ENCODE measurements at regions of chr3 and their contacts with region 1.

Region 1: GRCh38 chr3:58188173-58188564 is 22.6 kb downstream of the DNASE1L3 start:
- DNase-seq: no peak
- ATAC-seq: peak; percentile 55
- H3K4me3 Mint-ChIP-seq: no peak overlapping the region
- H3K27ac Mint-ChIP-seq: no peak overlapping the region
- H3K4me1 Mint-ChIP-seq: no peaks in the 10 kb centered on the region
- H3K27me3 Mint-ChIP-seq: no peaks in the 10 kb centered on the region
- CTCF ChIP-seq: no peak

Region 2: GRCh38 chr3:58167431-58168351 is 20.5 kb before region 1 on chr3:
- CTCF ChIA-PET with region 1: interaction called, 10 read pairs
- POLR2A ChIA-PET with region 1: no interaction called
- intact Hi-C with region 1: no loop called
- DNase-seq: peak; percentile 80
- ATAC-seq: peak; percentile 99
- H3K4me3 Mint-ChIP-seq: no peak overlapping the region
- H3K27ac Mint-ChIP-seq: no peak overlapping the region
- H3K4me1 Mint-ChIP-seq: peaks cover 3% of the 10 kb centered on the region
- H3K27me3 Mint-ChIP-seq: no peaks in the 10 kb centered on the region
- CTCF ChIP-seq: peak; percentile 92

Region 3: GRCh38 chr3:58202917-58203360 is 14.8 kb after region 1 on chr3:
- CTCF ChIA-PET with region 1: interaction called, 30 read pairs
- POLR2A ChIA-PET with region 1: no interaction called
- intact Hi-C with region 1: no loop called
- DNase-seq: no peak
- ATAC-seq: no peak
- H3K4me3 Mint-ChIP-seq: no peak overlapping the region
- H3K27ac Mint-ChIP-seq: no peak overlapping the region
- H3K4me1 Mint-ChIP-seq: peaks cover 16% of the 10 kb centered on the region
- H3K27me3 Mint-ChIP-seq: peaks cover 4% of the 10 kb centered on the region
- CTCF ChIP-seq: no peak

Region 4: GRCh38 chr3:58223855-58224254 is 35.7 kb after region 1 on chr3:
- CTCF ChIA-PET with region 1: interaction called, 264 read pairs
- POLR2A ChIA-PET with region 1: interaction called, 3 read pairs
- intact Hi-C with region 1: no loop called
- DNase-seq: no peak
- ATAC-seq: no peak
- H3K4me3 Mint-ChIP-seq: no peak overlapping the region
- H3K27ac Mint-ChIP-seq: no peak overlapping the region
- H3K4me1 Mint-ChIP-seq: peaks cover 2% of the 10 kb centered on the region
- H3K27me3 Mint-ChIP-seq: peaks cover 3% of the 10 kb centered on the region
- CTCF ChIP-seq: no peak

Region 5: GRCh38 chr3:58299839-58300516 is 111.8 kb after region 1 on chr3:
- CTCF ChIA-PET with region 1: interaction called, 47 read pairs
- POLR2A ChIA-PET with region 1: interaction called, 3 read pairs
- intact Hi-C with region 1: loop called (anchors 5 kb)
- DNase-seq: no peak
- ATAC-seq: no peak
- H3K4me3 Mint-ChIP-seq: no peak overlapping the region
- H3K27ac Mint-ChIP-seq: no peak overlapping the region
- H3K4me1 Mint-ChIP-seq: no peaks in the 10 kb centered on the region
- H3K27me3 Mint-ChIP-seq: peaks cover 17% of the 10 kb centered on the region
- CTCF ChIP-seq: peak; percentile 58

Measured in activated CD8-positive, alpha-beta T cell treated with anti-CD3 and anti-CD28 coated beads for 36 hours (primary cell).